Heart right ventricle (tissue), 16 donors: ENCODE measurements at regions of chrX and their contacts with region 1.

Region 1: GRCh38 chrX:63754860-63755582 is 30.0 kb downstream of the ARHGEF9 start:
- DNase-seq: peak; percentile 90
- ATAC-seq: peak; percentile 97 to 99 (median 99)
- H3K4me3 ChIP-seq: peak overlapping the region; percentile 40 to 82 (median 65)
- H3K27ac ChIP-seq: peak overlapping the region; percentile 42 to 95 (median 88)
- H3K4me1 ChIP-seq: peaks cover 0 to 26% (median 10%) of the 10 kb centered on the region in 9 donors
- H3K27me3 ChIP-seq: peaks cover 0 to 7% (median 0%) of the 10 kb centered on the region in 7 donors
- CTCF ChIP-seq: no peak

Region 2: DNA sequence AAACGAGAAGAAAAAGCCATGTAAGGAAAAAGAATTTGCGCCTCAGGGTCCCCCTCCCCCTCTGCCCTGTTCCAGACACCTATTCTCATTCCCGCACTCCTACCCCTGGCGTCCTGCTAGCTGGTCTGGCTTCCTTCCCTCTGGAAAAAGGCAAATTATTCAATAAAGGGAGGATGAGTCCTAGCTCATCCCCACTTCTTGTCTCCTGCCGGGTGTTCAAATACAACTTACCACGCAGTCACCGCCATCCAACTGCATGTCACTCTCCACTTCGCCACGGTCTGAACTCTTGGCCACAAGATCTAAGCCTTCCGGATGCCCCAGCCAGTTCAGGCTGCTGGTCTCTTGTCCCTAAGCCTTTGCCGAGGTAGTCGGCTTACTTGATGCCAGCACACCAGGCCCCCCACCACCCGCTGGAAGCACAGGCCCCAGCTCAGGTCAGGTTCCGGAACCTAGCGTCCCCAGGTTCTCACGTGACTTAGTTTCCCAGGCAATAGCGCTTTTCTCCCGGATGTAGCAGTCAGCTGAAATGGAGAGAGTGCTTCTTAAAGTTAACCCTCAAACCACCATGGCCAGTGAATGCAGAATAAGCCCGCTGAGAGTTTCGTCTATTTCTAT is 194.3 kb before region 1 on chrX:
- intact Hi-C with region 1: loop called in 1 of 10 experiments (anchors 10 kb)
- DNase-seq: peak; percentile 22 to 50
- ATAC-seq: peak; percentile 93 to 99 (median 98)
- H3K4me3 ChIP-seq: peak overlapping the region; percentile 41 to 76 (median 68)
- H3K27ac ChIP-seq: peak overlapping the region in 8 of 10 donors; percentile 28 to 81 (median 73)
- H3K4me1 ChIP-seq: peaks cover 0 to 15% (median 4%) of the 10 kb centered on the region in 9 donors
- H3K27me3 ChIP-seq: peaks cover 0 to 5% (median 0%) of the 10 kb centered on the region in 7 donors
- CTCF ChIP-seq: no peak

Region 3: GRCh38 chrX:63718010-63718694 is 36.9 kb before region 1 on chrX:
- intact Hi-C with region 1: loop called in 2 of 10 experiments (anchors 5 kb)
- DNase-seq: no peak
- ATAC-seq: peak in 4 of 8 donors; percentile 25 to 65 (median 47)
- H3K4me3 ChIP-seq: no peak overlapping the region
- H3K27ac ChIP-seq: peak overlapping the region in 3 of 10 donors; percentile 28 to 39 (median 33)
- H3K4me1 ChIP-seq: peaks cover 0 to 16% (median 2%) of the 10 kb centered on the region in 9 donors
- H3K27me3 ChIP-seq: peaks cover 0 to 10% (median 0%) of the 10 kb centered on the region in 7 donors
- CTCF ChIP-seq: no peak

Region 4: GRCh38 chrX:64205735-64206491 is 450.9 kb after region 1 on chrX:
- intact Hi-C with region 1: loop called in 2 of 10 experiments (anchors 5 to 10 kb)
- DNase-seq: peak; percentile 91 to 92
- ATAC-seq: peak; percentile 92 to 96 (median 95)
- H3K4me3 ChIP-seq: peak overlapping the region; percentile 59 to 89 (median 78)
- H3K27ac ChIP-seq: peak overlapping the region; percentile 87 to 95 (median 92)
- H3K4me1 ChIP-seq: peaks cover 0 to 41% (median 20%) of the 10 kb centered on the region in 9 donors
- H3K27me3 ChIP-seq: no peaks in the 10 kb centered on the region
- CTCF ChIP-seq: peak in 4 of 9 donors; percentile 13 to 37 (median 24)